HEK293 (cell line): ENCODE measurements at regions of chr9 and their contacts with region 1.

Region 1: GRCh38 chr9:112061152-112061740 is 113.9 kb downstream of the SUSD1 start:
- H3K4me3 ChIP-seq: no peak overlapping the region
- H3K27ac ChIP-seq: no peak overlapping the region
- H3K4me1 ChIP-seq: no peaks in the 10 kb centered on the region; the same call in 1 of the 2 replicates
- CTCF ChIP-seq: no peak

Region 2: DNA sequence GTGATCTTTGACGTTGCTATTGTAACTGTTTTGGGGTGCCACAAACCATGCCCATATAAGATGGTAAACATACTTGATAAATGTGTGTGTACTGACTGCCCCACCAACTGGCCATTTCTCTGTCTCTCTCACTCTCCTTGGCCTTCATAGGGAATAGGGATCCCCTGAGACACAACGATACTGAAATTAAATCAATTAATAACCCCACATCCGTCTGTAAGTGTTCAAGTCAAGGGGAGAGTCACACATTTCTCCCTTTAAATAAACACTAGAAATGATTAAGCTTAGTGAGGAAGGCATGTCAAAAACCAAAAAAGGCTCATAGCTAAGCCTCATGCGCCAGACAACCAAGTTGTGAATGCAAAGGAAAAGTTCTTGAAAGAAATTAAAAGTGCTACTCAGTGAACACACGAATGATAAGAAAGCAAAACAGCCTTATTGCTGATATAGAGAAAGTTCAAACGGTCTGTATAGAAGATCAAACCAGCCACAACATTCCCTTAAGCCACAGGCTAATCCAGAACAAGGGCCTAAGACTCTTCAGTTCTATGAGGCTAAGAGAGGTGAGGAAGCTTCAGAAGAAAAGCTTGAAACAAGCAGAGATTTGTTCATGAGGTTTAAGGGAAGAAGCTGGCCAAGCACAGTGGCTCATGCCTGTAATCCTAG is 53.5 kb before region 1 on chr9:
- CTCF ChIA-PET with region 1: no interaction called
- POLR2A ChIA-PET with region 1: no interaction called
- H3K4me3 ChIP-seq: no peak overlapping the region
- H3K27ac ChIP-seq: no peak overlapping the region
- H3K4me1 ChIP-seq: no peaks in the 10 kb centered on the region
- CTCF ChIP-seq: no peak

Region 3: GRCh38 chr9:112401175-112401815 is 340.0 kb after region 1 on chr9:
- CTCF ChIA-PET with region 1: no interaction called
- POLR2A ChIA-PET with region 1: interaction called, 10 read pairs
- H3K4me3 ChIP-seq: no peak overlapping the region
- H3K27ac ChIP-seq: no peak overlapping the region
- H3K4me1 ChIP-seq: no peaks in the 10 kb centered on the region
- CTCF ChIP-seq: no peak